ENCODE measurements at regions of chr7 and their contacts with region 1.

Region 1: GRCh38 chr7:22559829-22560489 is 60.0 kb upstream of the STEAP1B start:
- DNase-seq: peak in 8 of 9 donors; percentile 48 to 77 (median 66)
- ATAC-seq: peak; percentile 94
- H3K4me3 ChIP-seq: no peak overlapping the region
- H3K4me3 Mint-ChIP-seq: no peak overlapping the region
- H3K27ac ChIP-seq: no peak overlapping the region
- H3K27ac Mint-ChIP-seq: peak overlapping the region in 1 of 9 donors; percentile 3
- H3K4me1 ChIP-seq: peaks cover 19 to 22% of the 10 kb centered on the region in 2 donors
- H3K4me1 Mint-ChIP-seq: peaks cover 18 to 44% (median 25%) of the 10 kb centered on the region in 7 donors
- H3K27me3 ChIP-seq: no peaks in the 10 kb centered on the region
- H3K27me3 Mint-ChIP-seq: peaks cover 5 to 16% (median 9%) of the 10 kb centered on the region in 5 donors

Region 2: GRCh38 chr7:22660732-22661131 is 100.8 kb after region 1 on chr7:
- CTCF ChIA-PET with region 1: interaction called, 3 read pairs
- POLR2A ChIA-PET with region 1: no interaction called
- intact Hi-C with region 1: loop called (anchors 1 to 5 kb)
- DNase-seq: no peak
- ATAC-seq: no peak
- H3K4me3 ChIP-seq: no peak overlapping the region
- H3K4me3 Mint-ChIP-seq: no peak overlapping the region
- H3K27ac ChIP-seq: no peak overlapping the region
- H3K27ac Mint-ChIP-seq: no peak overlapping the region
- H3K4me1 ChIP-seq: peaks cover 0 to 4% of the 10 kb centered on the region in 2 donors
- H3K4me1 Mint-ChIP-seq: peaks cover 7 to 29% (median 16%) of the 10 kb centered on the region in 7 donors
- H3K27me3 ChIP-seq: no peaks in the 10 kb centered on the region
- H3K27me3 Mint-ChIP-seq: peaks cover 0 to 39% (median 0%) of the 10 kb centered on the region in 5 donors

Region 3: GRCh38 chr7:22672846-22673652 is 113.1 kb after region 1 on chr7:
- CTCF ChIA-PET with region 1: no interaction called
- POLR2A ChIA-PET with region 1: no interaction called
- intact Hi-C with region 1: loop called in 1 of 2 experiments (anchors 5 kb)
- DNase-seq: no peak
- ATAC-seq: no peak
- H3K4me3 ChIP-seq: no peak overlapping the region
- H3K4me3 Mint-ChIP-seq: peak overlapping the region in 7 of 10 donors; percentile 7 to 68 (median 37)
- H3K27ac ChIP-seq: no peak overlapping the region
- H3K27ac Mint-ChIP-seq: peak overlapping the region; percentile 14 to 88 (median 78)
- H3K4me1 ChIP-seq: peaks cover 18 to 54% of the 10 kb centered on the region in 2 donors
- H3K4me1 Mint-ChIP-seq: peaks cover 43 to 68% (median 65%) of the 10 kb centered on the region in 7 donors
- H3K27me3 ChIP-seq: no peaks in the 10 kb centered on the region
- H3K27me3 Mint-ChIP-seq: peaks cover 0 to 13% (median 0%) of the 10 kb centered on the region in 5 donors

Region 4: DNA sequence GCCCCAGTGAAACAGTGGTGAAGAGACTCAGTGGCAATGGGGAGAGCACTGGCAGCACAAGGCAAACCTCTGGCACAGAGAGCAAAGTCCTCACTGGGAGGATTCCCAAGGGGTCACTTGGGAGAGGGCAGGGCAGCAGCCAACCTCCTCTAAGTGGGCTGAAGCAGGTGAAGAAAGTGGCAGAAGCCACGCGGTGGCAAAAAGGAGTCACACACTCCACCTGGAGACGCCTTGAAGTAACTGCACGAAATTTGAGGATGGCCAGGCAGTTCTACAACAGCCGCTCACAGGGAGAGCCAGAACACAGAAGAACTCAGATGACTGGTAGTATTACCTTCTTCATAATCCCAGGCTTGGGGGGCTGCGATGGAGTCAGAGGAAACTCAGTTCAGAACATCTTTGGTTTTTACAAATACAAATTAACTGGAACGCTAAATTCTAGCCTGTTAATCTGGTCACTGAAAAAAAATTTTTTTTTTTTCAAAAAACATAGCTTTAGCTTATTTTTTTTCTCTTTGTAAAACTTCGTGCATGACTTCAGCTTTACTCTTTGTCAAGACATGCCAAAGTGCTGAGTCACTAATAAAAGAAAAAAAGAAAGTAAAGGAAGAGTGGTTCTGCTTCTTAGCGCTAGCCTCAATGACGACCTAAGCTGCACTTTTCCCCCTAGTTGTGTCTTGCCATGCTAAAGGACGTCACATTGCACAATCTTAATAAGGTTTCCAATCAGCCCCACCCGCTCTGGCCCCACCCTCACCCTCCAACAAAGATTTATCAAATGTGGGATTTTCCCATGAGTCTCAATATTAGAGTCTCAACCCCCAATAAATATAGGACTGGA is 166.6 kb after region 1 on chr7:
- CTCF ChIA-PET with region 1: interaction called, 133 read pairs
- POLR2A ChIA-PET with region 1: no interaction called
- intact Hi-C with region 1: loop called (anchors 1 kb)
- DNase-seq: peak; percentile 19 to 67 (median 49)
- ATAC-seq: peak; percentile 84
- H3K4me3 ChIP-seq: no peak overlapping the region
- H3K4me3 Mint-ChIP-seq: peak overlapping the region; percentile 72 to 84 (median 78)
- H3K27ac ChIP-seq: no peak overlapping the region
- H3K27ac Mint-ChIP-seq: peak overlapping the region in 2 of 9 donors; percentile 15 to 41
- H3K4me1 ChIP-seq: peaks cover 0 to 5% of the 10 kb centered on the region in 2 donors
- H3K4me1 Mint-ChIP-seq: peaks cover 7 to 42% (median 21%) of the 10 kb centered on the region in 7 donors
- H3K27me3 ChIP-seq: no peaks in the 10 kb centered on the region
- H3K27me3 Mint-ChIP-seq: peaks cover 0 to 55% (median 4%) of the 10 kb centered on the region in 5 donors

Region 5: GRCh38 chr7:22732556-22733126 is 172.7 kb after region 1 on chr7:
- CTCF ChIA-PET with region 1: interaction called, 133 read pairs
- POLR2A ChIA-PET with region 1: no interaction called
- intact Hi-C with region 1: loop called in 1 of 2 experiments (anchors 1 kb)
- DNase-seq: peak in 2 of 9 donors; percentile 10 to 23
- ATAC-seq: no peak
- H3K4me3 ChIP-seq: no peak overlapping the region
- H3K4me3 Mint-ChIP-seq: no peak overlapping the region
- H3K27ac ChIP-seq: no peak overlapping the region
- H3K27ac Mint-ChIP-seq: no peak overlapping the region
- H3K4me1 ChIP-seq: no peaks in the 10 kb centered on the region
- H3K4me1 Mint-ChIP-seq: peaks cover 0 to 11% (median 6%) of the 10 kb centered on the region in 7 donors
- H3K27me3 ChIP-seq: peaks cover 0 to 2% of the 10 kb centered on the region in 2 donors
- H3K27me3 Mint-ChIP-seq: peaks cover 9 to 63% (median 22%) of the 10 kb centered on the region in 5 donors

Region 6: DNA sequence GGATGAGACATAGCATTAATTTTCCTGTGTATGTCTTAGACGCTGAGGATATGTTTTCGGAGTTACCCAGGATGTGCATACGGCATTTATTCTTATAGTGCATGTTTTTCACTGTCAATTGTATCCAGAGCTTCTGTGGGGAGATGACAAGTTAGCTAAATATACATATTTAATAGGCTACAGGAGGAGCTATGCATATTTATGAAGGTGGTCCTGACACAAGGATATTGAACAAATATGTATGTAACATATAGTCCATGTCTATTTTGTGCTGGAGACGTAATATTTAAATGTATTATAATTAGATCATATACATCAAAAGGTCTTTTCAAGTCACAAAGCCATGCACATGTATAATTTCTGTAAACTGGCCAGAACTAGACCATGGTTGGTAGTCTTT is 183.1 kb after region 1 on chr7:
- CTCF ChIA-PET with region 1: no interaction called
- POLR2A ChIA-PET with region 1: no interaction called
- intact Hi-C with region 1: no loop called
- DNase-seq: no peak
- ATAC-seq: no peak
- H3K4me3 ChIP-seq: no peak overlapping the region
- H3K4me3 Mint-ChIP-seq: no peak overlapping the region
- H3K27ac ChIP-seq: no peak overlapping the region
- H3K27ac Mint-ChIP-seq: no peak overlapping the region
- H3K4me1 ChIP-seq: no peaks in the 10 kb centered on the region
- H3K4me1 Mint-ChIP-seq: no peaks in the 10 kb centered on the region
- H3K27me3 ChIP-seq: no peaks in the 10 kb centered on the region
- H3K27me3 Mint-ChIP-seq: peaks cover 2 to 33% (median 3%) of the 10 kb centered on the region in 5 donors

Region 7: GRCh38 chr7:22782616-22783232 is 222.8 kb after region 1 on chr7:
- CTCF ChIA-PET with region 1: interaction called, 27 read pairs
- POLR2A ChIA-PET with region 1: interaction called, 3 read pairs
- intact Hi-C with region 1: loop called (anchors 1 kb)
- DNase-seq: peak; percentile 39 to 73 (median 59)
- ATAC-seq: peak; percentile 90
- H3K4me3 ChIP-seq: no peak overlapping the region
- H3K4me3 Mint-ChIP-seq: no peak overlapping the region
- H3K27ac ChIP-seq: no peak overlapping the region
- H3K27ac Mint-ChIP-seq: no peak overlapping the region
- H3K4me1 ChIP-seq: no peaks in the 10 kb centered on the region
- H3K4me1 Mint-ChIP-seq: no peaks in the 10 kb centered on the region
- H3K27me3 ChIP-seq: no peaks in the 10 kb centered on the region
- H3K27me3 Mint-ChIP-seq: peaks cover 0 to 23% (median 0%) of the 10 kb centered on the region in 5 donors

Region 8: DNA sequence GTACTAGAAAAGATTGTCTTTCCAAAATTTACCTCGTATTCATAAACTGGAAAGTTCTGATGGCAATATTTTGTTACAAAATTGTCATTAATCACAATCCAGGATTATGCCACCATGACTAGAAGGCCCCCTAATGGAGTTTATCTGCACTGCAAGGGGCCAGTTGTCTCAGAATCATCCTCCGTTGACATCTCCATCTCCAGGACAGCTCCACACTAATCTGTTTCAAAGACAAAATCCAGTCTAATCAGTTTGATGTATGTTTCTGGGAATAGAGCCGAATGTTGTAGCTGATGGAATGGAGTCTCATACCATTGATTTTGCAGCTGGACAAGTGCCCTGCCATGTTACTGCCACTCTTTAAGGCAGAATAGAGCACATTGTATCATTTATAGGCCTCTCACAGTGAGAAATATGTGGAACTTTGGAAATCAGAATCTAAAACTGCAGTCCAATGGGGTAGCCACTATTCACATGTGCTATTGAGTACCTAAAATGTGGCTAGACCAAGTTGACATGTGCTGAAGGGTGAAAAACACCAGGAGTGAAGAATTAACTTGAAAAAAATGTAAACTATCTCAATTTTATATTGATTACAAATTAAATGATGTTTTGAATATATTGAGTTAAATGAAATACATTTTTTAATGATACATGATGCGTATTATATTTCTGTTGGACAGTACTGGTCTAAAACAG is 301.0 kb after region 1 on chr7:
- CTCF ChIA-PET with region 1: no interaction called
- POLR2A ChIA-PET with region 1: no interaction called
- intact Hi-C with region 1: loop called in 1 of 2 experiments (anchors 1 kb)
- DNase-seq: peak in 1 of 9 donors; percentile 21
- ATAC-seq: peak; percentile 71
- H3K4me3 ChIP-seq: no peak overlapping the region
- H3K4me3 Mint-ChIP-seq: no peak overlapping the region
- H3K27ac ChIP-seq: no peak overlapping the region
- H3K27ac Mint-ChIP-seq: no peak overlapping the region
- H3K4me1 ChIP-seq: no peaks in the 10 kb centered on the region
- H3K4me1 Mint-ChIP-seq: peaks cover 4 to 37% (median 8%) of the 10 kb centered on the region in 7 donors
- H3K27me3 ChIP-seq: no peaks in the 10 kb centered on the region
- H3K27me3 Mint-ChIP-seq: no peaks in the 10 kb centered on the region

Region 9: GRCh38 chr7:24199978-24200377 is 1640.0 kb after region 1 on chr7:
- CTCF ChIA-PET with region 1: no interaction called
- POLR2A ChIA-PET with region 1: no interaction called
- intact Hi-C with region 1: no loop called
- DNase-seq: peak in 7 of 9 donors; percentile 16 to 56 (median 43)
- ATAC-seq: peak; percentile 92
- H3K4me3 ChIP-seq: no peak overlapping the region
- H3K4me3 Mint-ChIP-seq: peak overlapping the region in 4 of 10 donors; percentile 1 to 25 (median 10)
- H3K27ac ChIP-seq: no peak overlapping the region
- H3K27ac Mint-ChIP-seq: peak overlapping the region in 2 of 9 donors; percentile 5 to 9
- H3K4me1 ChIP-seq: peaks cover 8 to 10% of the 10 kb centered on the region in 2 donors
- H3K4me1 Mint-ChIP-seq: peaks cover 4 to 34% (median 25%) of the 10 kb centered on the region in 7 donors
- H3K27me3 ChIP-seq: no peaks in the 10 kb centered on the region
- H3K27me3 Mint-ChIP-seq: peaks cover 0 to 4% (median 0%) of the 10 kb centered on the region in 5 donors